ENCODE measurements at regions of chr9 and their contacts with region 1.

Region 1: DNA sequence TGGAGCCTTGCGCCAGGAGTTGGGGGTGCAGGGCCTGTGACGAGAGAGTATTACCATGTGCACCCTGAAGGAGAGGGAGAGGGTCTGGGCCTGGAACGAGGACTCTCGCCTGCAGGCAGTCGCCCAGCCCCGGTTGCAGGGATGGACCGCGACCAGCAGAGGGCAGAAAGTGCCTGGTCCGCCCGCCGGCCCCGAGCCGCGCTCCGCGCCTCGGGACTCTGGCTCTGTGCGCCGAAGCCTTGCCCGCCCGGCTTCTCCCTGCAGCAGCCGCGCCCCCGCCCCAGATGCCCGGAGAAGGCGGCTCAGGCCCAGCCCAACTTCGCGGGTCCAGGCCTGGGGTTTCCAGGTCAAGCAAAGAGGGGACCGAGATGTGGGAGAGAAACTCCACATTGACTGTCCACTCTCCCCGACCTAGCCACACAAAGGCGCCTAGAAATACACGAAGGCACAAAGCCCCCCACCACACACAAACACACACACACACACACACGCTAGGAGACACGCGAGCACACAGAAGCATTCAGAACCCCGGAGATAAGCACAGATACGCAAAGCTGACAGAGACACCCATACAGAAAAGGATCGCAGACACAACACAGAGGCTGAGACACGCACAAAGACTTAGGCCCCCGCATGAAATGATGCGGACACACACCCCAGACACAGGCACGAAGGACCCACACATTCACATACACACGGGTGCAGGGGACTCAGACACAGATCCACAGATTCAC is 2.0 kb upstream of the LMX1B start:
- DNase-seq: peak; percentile 75
- H3K4me3 ChIP-seq: no peak overlapping the region
- H3K27ac ChIP-seq: no peak overlapping the region
- H3K4me1 ChIP-seq: peaks cover 8% of the 10 kb centered on the region
- H3K27me3 ChIP-seq: peaks cover 86% of the 10 kb centered on the region
- CTCF ChIP-seq: peak; percentile 82

Region 2: DNA sequence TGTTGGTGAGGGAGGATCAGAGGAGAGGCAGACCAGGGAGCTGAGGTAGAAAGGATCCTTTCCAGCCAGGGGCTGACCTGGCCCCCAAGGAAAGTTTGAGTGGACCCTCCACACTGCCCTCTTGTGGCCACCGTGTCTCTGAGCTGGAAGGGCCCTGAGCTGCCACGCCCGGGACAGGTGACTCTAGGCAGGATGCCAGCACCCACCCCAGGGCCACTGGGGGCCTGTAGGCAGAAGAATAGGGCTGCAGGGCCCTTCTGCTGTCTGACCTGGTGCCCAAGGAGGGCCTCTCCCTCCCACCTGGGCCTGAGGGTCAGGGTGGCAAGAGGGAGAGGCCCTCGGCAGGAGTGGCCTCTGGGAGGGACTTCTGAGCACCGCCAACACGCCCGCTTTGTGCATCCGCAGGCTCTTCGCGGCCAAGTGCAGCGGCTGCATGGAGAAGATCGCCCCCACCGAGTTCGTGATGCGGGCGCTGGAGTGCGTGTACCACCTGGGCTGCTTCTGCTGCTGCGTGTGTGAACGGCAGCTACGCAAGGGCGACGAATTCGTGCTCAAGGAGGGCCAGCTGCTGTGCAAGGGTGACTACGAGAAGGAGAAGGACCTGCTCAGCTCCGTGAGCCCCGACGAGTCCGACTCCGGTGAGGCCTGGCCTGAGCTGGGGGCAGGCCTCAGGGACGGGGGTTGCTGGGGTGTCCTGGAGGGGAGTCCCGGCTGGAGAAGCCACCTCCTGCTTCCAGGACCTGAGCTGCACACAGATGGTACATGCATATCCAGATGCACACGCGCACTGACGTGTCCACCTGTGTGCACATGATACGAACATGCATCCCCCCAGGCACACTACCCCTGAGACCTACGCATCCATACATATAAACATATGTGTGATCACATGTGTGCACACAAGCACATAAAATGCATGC is 78.9 kb after region 1 on chr9:
- intact Hi-C with region 1: loop called (anchors 5 kb)
- DNase-seq: peak; percentile 64
- H3K4me3 ChIP-seq: no peak overlapping the region
- H3K27ac ChIP-seq: no peak overlapping the region
- H3K4me1 ChIP-seq: no peaks in the 10 kb centered on the region
- H3K27me3 ChIP-seq: peaks cover 33% of the 10 kb centered on the region
- CTCF ChIP-seq: peak; percentile 52

Region 3: DNA sequence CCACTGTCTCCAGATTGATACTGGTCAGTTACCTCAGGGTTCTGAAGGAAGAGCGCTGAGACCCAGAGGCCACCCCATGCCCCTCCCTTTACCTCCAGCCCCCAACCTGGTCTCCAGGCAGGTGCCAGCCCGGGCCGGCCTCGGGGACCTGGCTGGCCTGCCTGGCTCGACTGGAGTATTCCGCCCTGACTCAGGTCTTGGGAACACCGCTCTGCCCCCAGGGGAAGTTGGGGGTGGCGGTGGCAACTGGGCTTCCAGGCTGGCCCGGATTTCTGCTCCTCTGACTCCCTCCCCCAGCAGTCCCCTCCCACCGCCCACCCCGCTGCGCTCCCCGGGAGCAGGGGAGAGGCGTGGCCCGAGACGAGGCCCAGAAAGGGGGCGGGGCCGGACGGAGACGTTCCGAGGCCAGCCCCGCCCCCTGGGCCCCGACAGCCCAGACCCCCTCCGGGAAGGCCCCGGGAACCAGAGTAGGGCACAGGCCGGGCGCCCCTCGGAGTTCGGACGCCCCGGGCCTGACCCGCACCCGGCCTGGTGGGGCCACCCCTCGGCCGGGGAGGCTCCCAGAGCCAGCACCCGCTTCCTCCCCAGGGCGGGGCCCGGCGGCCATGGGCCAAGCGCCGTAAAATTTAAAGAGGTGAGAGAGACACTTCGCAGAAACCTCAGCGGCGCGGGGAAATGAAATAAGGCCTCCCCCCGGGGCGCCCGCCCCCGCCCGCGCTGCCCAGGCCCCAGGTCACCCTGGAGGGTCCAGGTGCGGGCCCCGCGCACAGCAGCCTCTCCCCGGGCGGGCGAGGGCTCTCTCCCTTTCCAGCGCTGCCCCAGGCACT is 110.7 kb after region 1 on chr9:
- intact Hi-C with region 1: no loop called
- DNase-seq: peak; percentile 78
- H3K4me3 ChIP-seq: peak overlapping the region; percentile 49
- H3K27ac ChIP-seq: peak overlapping the region; percentile 72
- H3K4me1 ChIP-seq: no peaks in the 10 kb centered on the region
- H3K27me3 ChIP-seq: peaks cover 55% of the 10 kb centered on the region
- CTCF ChIP-seq: no peak

Region 4: DNA sequence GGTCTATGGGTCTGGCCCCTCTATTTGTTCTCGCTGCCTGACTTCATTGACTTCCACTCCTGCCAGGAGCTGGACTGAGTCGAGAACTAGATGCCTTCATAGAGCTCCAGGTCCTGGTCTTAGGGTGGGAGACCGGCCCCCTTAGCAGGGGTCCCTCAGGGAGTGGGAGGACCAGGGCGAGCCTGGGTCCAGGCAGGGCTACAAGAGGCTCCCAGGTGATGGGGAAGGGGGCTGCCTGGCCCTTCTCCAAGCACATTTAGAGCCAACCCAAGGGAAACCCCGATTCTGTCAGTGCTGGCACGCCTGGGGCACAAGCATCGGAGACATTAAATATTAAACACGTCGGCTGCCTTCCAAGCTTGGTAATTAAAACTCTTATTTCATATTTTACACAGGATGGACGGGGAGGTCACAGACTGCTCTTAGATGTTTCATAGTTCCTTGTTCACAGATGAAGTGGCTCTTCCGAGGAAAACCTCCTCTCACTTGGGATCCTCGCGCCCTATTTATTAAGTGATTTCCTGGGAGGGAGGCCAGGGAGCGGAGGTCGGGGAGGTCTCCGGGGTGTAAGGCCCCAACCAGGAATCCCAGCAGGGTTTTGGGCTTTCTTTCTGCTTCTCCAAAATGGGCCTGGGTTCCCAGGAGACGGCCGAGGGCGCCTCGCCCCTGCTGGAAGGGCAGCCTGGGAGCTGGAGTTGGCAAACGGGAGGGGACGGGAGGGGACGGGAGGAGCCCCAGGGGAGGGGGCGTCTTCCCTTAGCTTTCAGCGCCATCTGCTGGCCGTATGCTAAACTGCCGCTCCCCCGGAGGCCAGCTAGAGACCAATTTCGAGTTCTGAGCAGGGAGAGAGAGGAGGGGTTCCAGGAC is 169.7 kb after region 1 on chr9:
- intact Hi-C with region 1: loop called (anchors 5 kb)
- DNase-seq: peak; percentile 78
- H3K4me3 ChIP-seq: no peak overlapping the region
- H3K27ac ChIP-seq: no peak overlapping the region
- H3K4me1 ChIP-seq: no peaks in the 10 kb centered on the region
- H3K27me3 ChIP-seq: peaks cover 6% of the 10 kb centered on the region
- CTCF ChIP-seq: peak; percentile 95

Measured in colonic mucosa (tissue), 4 donors.